ENCODE measurements at regions of chr1 and their contacts with region 1.

Region 1: GRCh38 chr1:222455188-222455879 is 92.6 kb downstream of the HHIPL2 start:
- DNase-seq: peak; percentile 97
- H3K4me3 Mint-ChIP-seq: peak overlapping the region; percentile 37
- H3K27ac Mint-ChIP-seq: peak overlapping the region; percentile 54
- H3K4me1 Mint-ChIP-seq: peaks cover 16% of the 10 kb centered on the region
- H3K27me3 Mint-ChIP-seq: no peaks in the 10 kb centered on the region
- CTCF ChIP-seq: peak; percentile 100

Region 2: GRCh38 chr1:221435504-221435904 is 1019.8 kb before region 1 on chr1:
- CTCF ChIA-PET with region 1: interaction called, 19 read pairs
- POLR2A ChIA-PET with region 1: interaction called, 4 read pairs
- intact Hi-C with region 1: loop called (anchors 1 kb)
- DNase-seq: peak; percentile 80
- H3K4me3 Mint-ChIP-seq: no peak overlapping the region
- H3K27ac Mint-ChIP-seq: no peak overlapping the region
- H3K4me1 Mint-ChIP-seq: peaks cover 26% of the 10 kb centered on the region
- H3K27me3 Mint-ChIP-seq: no peaks in the 10 kb centered on the region
- CTCF ChIP-seq: peak; percentile 99

Region 3: DNA sequence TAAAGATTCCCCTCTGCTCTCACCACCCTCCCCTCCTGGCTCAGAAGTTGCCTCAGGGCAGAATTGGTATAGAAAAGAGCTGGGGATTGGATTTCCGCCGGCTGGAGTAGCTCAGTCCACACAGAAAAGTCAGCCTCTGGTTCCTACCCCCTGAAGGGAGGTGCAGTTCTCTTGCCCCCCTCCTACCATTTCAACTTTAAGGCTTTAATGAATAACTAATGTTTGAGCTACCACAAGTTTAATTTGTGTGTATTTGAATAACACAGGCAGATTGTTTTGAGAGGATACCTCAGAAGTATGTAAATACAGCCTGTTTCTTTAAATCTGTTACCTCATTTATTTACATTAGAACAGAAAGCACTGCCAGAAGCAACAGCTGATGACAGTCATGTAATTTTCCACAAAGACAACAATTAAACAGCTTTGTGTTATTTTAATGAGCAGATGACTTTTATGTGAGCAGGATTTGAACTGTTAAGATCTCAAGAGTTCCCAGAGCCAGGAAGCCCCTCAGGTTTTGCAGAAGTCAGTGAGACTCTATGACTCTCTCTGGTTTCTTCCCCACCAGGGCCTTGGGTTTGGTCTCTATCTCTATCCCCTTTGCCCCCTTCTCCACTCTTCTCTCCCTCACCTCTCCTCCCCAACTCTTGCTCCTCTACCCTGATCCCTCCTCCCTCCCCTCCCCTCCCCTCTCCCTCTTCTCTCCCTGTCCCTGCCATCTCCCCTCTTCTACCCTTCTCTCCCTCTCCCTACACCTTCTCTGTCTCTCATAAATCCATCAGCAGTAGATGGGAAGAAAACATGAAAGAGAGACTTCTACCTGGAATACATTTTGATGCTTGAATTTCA is 739.8 kb before region 1 on chr1:
- CTCF ChIA-PET with region 1: interaction called, 16 read pairs
- POLR2A ChIA-PET with region 1: no interaction called
- intact Hi-C with region 1: no loop called
- DNase-seq: peak; percentile 60
- H3K4me3 Mint-ChIP-seq: no peak overlapping the region
- H3K27ac Mint-ChIP-seq: peak overlapping the region; percentile 75
- H3K4me1 Mint-ChIP-seq: peaks cover 60% of the 10 kb centered on the region
- H3K27me3 Mint-ChIP-seq: no peaks in the 10 kb centered on the region
- CTCF ChIP-seq: no peak

Region 4: DNA sequence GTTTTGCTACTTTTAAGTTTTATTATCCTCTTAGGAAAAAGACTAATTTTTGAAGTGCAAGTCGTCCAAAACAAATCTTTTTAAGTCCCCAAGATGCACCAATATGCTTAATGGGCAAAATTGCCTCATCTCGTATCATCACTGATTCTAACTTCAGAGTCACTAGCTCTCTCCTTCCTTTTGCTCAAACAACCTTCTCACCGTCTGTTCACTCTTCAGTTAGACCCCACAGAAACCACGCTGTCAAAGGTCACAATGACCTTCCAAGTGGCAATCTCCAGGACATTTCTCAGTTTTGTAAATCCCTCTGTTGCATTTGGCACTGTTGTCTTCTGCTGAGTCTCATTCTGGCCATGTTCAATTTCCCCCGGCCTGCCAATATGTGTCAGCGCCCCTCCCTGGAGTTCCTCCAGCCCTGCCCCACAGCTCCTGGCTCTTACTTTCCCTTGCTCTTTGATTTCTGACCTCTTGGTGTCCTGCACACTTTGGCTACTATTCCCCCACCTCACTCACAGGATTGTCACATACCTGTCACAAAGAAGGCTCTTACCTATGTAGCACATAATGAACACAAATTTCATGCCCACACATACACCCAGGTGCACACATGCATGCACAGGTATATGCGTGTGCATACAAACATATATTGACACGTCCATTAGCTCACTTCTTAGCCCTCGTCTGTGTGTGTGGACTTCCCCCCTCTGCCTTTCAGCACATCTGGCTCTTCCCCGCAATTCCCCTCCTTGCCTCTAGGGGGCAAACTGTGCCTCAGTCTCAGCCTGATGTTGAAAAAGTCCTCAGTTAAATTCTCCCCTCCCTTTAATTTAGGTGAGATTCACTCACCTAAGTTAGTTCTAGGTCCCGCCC is 359.5 kb before region 1 on chr1:
- CTCF ChIA-PET with region 1: interaction called, 39 read pairs
- POLR2A ChIA-PET with region 1: no interaction called
- intact Hi-C with region 1: loop called (anchors 1 kb)
- DNase-seq: peak; percentile 72
- H3K4me3 Mint-ChIP-seq: no peak overlapping the region
- H3K27ac Mint-ChIP-seq: no peak overlapping the region
- H3K4me1 Mint-ChIP-seq: no peaks in the 10 kb centered on the region
- H3K27me3 Mint-ChIP-seq: no peaks in the 10 kb centered on the region
- CTCF ChIP-seq: peak; percentile 97

Region 5: DNA sequence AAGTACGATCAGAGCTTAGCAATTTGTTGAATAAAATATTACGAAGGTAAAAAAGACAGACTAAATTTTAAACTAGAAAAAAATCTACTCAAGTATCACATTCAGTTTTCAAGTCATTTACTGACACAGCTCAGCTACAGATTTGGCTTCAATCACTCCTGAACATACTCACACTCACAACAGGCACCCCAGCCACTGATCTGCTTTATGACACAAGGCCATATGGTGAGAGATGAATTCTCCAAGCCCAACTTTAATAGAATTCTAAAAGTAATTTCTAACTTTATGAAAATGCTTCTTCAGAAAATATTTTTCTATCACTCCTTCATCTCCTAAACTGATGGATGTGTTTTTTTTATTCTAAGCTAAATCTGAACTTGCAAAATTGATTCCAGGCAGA is 244.6 kb before region 1 on chr1:
- CTCF ChIA-PET with region 1: interaction called, 32 read pairs
- POLR2A ChIA-PET with region 1: interaction called, 8 read pairs
- intact Hi-C with region 1: loop called (anchors 1 kb)
- DNase-seq: no peak
- H3K4me3 Mint-ChIP-seq: no peak overlapping the region
- H3K27ac Mint-ChIP-seq: no peak overlapping the region
- H3K4me1 Mint-ChIP-seq: no peaks in the 10 kb centered on the region
- H3K27me3 Mint-ChIP-seq: no peaks in the 10 kb centered on the region
- CTCF ChIP-seq: no peak

Region 6: GRCh38 chr1:222331340-222331739 is 124.0 kb before region 1 on chr1:
- CTCF ChIA-PET with region 1: interaction called, 11 read pairs
- POLR2A ChIA-PET with region 1: no interaction called
- intact Hi-C with region 1: no loop called
- DNase-seq: no peak
- H3K4me3 Mint-ChIP-seq: no peak overlapping the region
- H3K27ac Mint-ChIP-seq: no peak overlapping the region
- H3K4me1 Mint-ChIP-seq: peaks cover 7% of the 10 kb centered on the region
- H3K27me3 Mint-ChIP-seq: no peaks in the 10 kb centered on the region
- CTCF ChIP-seq: no peak